Left lung (tissue), 14 donors: ENCODE measurements at regions of chr16 and their contacts with region 1.

Region 1: GRCh38 chr16:46673320-46674013 is 15.5 kb downstream of the VPS35 start:
- DNase-seq: peak in 3 of 4 donors; percentile 26 to 48 (median 43)
- ATAC-seq: peak; percentile 99
- H3K4me3 ChIP-seq: no peak overlapping the region
- H3K27ac ChIP-seq: no peak overlapping the region
- H3K4me1 ChIP-seq: no peaks in the 10 kb centered on the region
- H3K27me3 ChIP-seq: no peaks in the 10 kb centered on the region
- CTCF ChIP-seq: peak; percentile 77 to 82

Region 2: DNA sequence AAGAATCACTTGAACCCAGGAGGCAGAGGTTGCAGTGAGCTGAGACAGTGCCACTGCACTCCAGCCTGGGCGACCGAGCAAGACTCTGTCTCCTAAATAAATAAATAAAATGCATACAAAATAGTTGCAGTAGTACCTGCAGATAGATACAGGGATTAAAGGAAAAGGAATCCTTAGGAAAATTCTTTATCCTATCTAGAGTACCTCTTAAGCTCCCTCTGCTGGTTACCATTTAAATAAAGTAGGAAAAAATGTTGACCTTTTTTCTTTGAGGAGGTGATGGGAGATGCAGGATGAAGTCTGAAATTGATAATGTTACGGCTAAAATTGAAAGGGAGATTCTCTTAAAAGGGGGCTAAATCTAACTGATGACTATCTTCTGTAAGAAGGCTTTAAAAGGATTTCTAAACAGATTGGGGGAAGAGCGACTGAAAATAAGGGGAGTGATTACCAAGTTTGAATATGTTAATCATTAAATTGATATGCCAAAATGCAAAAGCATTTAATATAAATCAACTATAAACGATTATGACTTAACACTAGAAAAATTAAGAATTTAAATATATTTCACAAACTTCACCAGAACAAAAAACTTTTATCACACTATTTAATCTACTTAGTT is 128.1 kb after region 1 on chr16:
- intact Hi-C with region 1: loop called in 1 of 2 experiments (anchors 10 kb)
- DNase-seq: no peak
- ATAC-seq: peak; percentile 73
- H3K4me3 ChIP-seq: no peak overlapping the region
- H3K27ac ChIP-seq: no peak overlapping the region
- H3K4me1 ChIP-seq: no peaks in the 10 kb centered on the region
- H3K27me3 ChIP-seq: no peaks in the 10 kb centered on the region
- CTCF ChIP-seq: peak in 1 of 2 donors; percentile 34